Natural killer cell (primary cell): ENCODE measurements at regions of chr11 and their contacts with region 1.

Region 1: GRCh38 chr11:57644748-57645688 is 4.7 kb downstream of the YPEL4 start:
- DNase-seq: peak; percentile 70 to 91
- ATAC-seq: peak; percentile 56 to 84 (median 70)
- H3K4me3 ChIP-seq: no peak overlapping the region
- H3K4me3 Mint-ChIP-seq: no peak overlapping the region
- H3K27ac ChIP-seq: no peak overlapping the region
- H3K27ac Mint-ChIP-seq: peak overlapping the region in 1 of 2 donors; percentile 35
- H3K4me1 ChIP-seq: peaks cover 34% of the 10 kb centered on the region
- H3K4me1 Mint-ChIP-seq: peaks cover 26 to 35% of the 10 kb centered on the region in 2 donors
- H3K27me3 ChIP-seq: peaks cover 38% of the 10 kb centered on the region
- H3K27me3 Mint-ChIP-seq: peaks cover 42 to 46% of the 10 kb centered on the region in 2 donors
- CTCF ChIP-seq: peak; percentile 74

Region 2: DNA sequence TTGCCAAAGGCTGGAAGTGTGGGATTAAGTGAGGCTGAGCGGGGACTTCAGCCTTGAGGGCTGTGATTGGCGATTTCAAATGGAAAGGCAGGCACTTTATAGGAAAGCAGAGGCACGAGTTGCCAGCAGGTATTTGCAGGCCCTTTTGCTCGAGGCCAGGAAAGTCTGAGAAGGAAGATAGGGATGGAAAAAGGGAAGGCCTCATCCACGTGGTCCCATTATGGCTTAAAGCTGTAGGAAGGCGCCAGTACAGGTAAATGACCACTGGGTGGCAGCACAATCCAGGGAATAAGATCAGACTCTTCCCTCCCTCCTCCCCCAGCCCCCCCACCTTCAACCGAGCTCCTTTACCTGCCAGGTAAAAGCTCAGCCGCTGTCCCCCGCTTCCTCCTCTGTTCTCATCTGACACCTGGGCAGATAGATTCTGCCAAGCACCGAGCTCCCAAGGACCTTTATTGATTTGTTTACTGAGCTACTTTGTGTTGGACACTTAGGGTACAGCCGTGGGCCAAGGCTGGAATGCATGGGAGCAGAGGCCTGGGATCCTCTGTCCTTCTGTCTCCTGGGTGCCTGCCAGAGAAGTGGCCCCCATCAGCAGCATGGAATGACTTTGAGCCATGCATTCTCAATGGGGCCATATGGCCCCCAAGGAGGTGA is 299.3 kb before region 1 on chr11:
- intact Hi-C with region 1: loop called (anchors 1 kb)
- DNase-seq: peak; percentile 57 to 88
- ATAC-seq: peak; percentile 69 to 87 (median 86)
- H3K4me3 ChIP-seq: no peak overlapping the region
- H3K4me3 Mint-ChIP-seq: no peak overlapping the region
- H3K27ac ChIP-seq: no peak overlapping the region
- H3K27ac Mint-ChIP-seq: no peak overlapping the region
- H3K4me1 ChIP-seq: peaks cover 17% of the 10 kb centered on the region
- H3K4me1 Mint-ChIP-seq: peaks cover 16 to 19% of the 10 kb centered on the region in 2 donors
- H3K27me3 ChIP-seq: no peaks in the 10 kb centered on the region
- H3K27me3 Mint-ChIP-seq: peaks cover 0 to under 1% of the 10 kb centered on the region in 2 donors
- CTCF ChIP-seq: peak; percentile 84

Region 3: DNA sequence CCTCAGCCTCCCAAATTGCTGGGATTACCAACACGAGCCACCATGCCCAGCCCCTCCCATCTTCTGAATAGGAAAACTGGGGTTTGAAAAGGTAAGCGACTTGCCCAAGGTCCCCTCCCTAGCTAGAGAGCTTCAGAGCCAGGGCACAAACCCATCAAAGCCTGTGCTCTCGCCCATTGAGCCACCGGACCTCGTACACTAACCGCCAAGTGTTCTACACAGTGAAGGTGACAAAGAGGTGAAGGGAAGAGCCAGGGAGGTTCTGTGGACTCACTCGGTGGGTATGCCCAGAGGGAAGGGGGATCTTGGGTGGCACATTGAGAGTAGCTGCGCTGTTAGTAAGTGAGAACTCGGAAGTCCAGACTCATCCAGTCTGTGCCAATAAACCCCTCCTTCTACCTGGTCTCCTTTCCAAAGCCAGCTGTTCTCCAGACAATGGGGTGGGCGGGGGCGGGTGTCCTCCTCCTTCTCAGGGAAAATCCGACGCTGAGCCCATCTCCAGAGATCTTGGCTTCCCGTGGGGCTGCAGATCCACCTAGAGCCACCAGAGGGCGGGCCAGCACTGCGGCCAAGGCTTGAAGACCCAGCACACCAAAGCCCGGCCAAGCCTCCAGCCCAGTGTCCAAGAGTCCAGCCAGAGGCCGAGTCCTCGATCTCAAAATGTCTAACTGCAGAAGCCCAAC is 187.9 kb before region 1 on chr11:
- intact Hi-C with region 1: loop called (anchors 2 kb)
- DNase-seq: peak; percentile 73 to 85
- ATAC-seq: peak; percentile 77 to 80 (median 78)
- H3K4me3 ChIP-seq: no peak overlapping the region
- H3K4me3 Mint-ChIP-seq: peak overlapping the region; percentile 73
- H3K27ac ChIP-seq: no peak overlapping the region
- H3K27ac Mint-ChIP-seq: no peak overlapping the region
- H3K4me1 ChIP-seq: peaks cover 41% of the 10 kb centered on the region
- H3K4me1 Mint-ChIP-seq: peaks cover 24 to 39% of the 10 kb centered on the region in 2 donors
- H3K27me3 ChIP-seq: peaks cover 33% of the 10 kb centered on the region
- H3K27me3 Mint-ChIP-seq: peaks cover 23 to 28% of the 10 kb centered on the region in 2 donors
- CTCF ChIP-seq: peak; percentile 95

Region 4: GRCh38 chr11:57493507-57494503 is 151.2 kb before region 1 on chr11:
- intact Hi-C with region 1: loop called (anchors 1 kb)
- DNase-seq: peak; percentile 56 to 83
- ATAC-seq: peak; percentile 74 to 91 (median 87)
- H3K4me3 ChIP-seq: no peak overlapping the region
- H3K4me3 Mint-ChIP-seq: no peak overlapping the region
- H3K27ac ChIP-seq: no peak overlapping the region
- H3K27ac Mint-ChIP-seq: no peak overlapping the region
- H3K4me1 ChIP-seq: no peaks in the 10 kb centered on the region
- H3K4me1 Mint-ChIP-seq: no peaks in the 10 kb centered on the region
- H3K27me3 ChIP-seq: no peaks in the 10 kb centered on the region
- H3K27me3 Mint-ChIP-seq: no peaks in the 10 kb centered on the region
- CTCF ChIP-seq: peak; percentile 96

Region 5: GRCh38 chr11:57567515-57568329 is 77.3 kb before region 1 on chr11 and contains the start of gene UBE2L6:
- intact Hi-C with region 1: loop called (anchors 1 kb)
- DNase-seq: peak; percentile 56 to 95
- ATAC-seq: peak; percentile 76 to 91 (median 78)
- H3K4me3 ChIP-seq: peak within 1 kb of the TSS; percentile 99
- H3K4me3 Mint-ChIP-seq: peak within 1 kb of the TSS; percentile 99
- H3K27ac ChIP-seq: peak within 1 kb of the TSS; percentile 95
- H3K27ac Mint-ChIP-seq: peak within 1 kb of the TSS; percentile 96 to 99
- H3K4me1 ChIP-seq: peaks cover 24% of the 10 kb centered on the region
- H3K4me1 Mint-ChIP-seq: peaks cover 40 to 50% of the 10 kb centered on the region in 2 donors
- H3K27me3 ChIP-seq: no peaks in the 10 kb centered on the region
- H3K27me3 Mint-ChIP-seq: no peaks in the 10 kb centered on the region
- CTCF ChIP-seq: peak; percentile 93
- total RNA-seq, gene UBE2L6: 89.1 to 108 (median 103) TPM